ENCODE measurements at regions of chr9 and their contacts with region 1.

Region 1: GRCh38 chr9:126558051-126558665 is 55.6 kb upstream of the LMX1B start:
- DNase-seq: peak; percentile 38 to 72 (median 63)
- H3K4me3 ChIP-seq: no peak overlapping the region
- H3K27ac ChIP-seq: no peak overlapping the region
- H3K4me1 ChIP-seq: peaks cover 0 to 4% (median 2%) of the 10 kb centered on the region in 4 experiments
- H3K27me3 ChIP-seq: peaks cover 0 to 21% (median 4%) of the 10 kb centered on the region in 5 experiments

Region 2: GRCh38 chr9:126506361-126506941 is 51.7 kb before region 1 on chr9:
- CTCF ChIA-PET with region 1: interaction called, 118 read pairs
- POLR2A ChIA-PET with region 1: interaction called, 4 read pairs
- DNase-seq: no peak
- H3K4me3 ChIP-seq: no peak overlapping the region
- H3K27ac ChIP-seq: no peak overlapping the region
- H3K4me1 ChIP-seq: no peaks in the 10 kb centered on the region
- H3K27me3 ChIP-seq: peaks cover 0 to 5% (median 0%) of the 10 kb centered on the region in 5 experiments

Region 3: GRCh38 chr9:126532019-126532462 is 26.1 kb before region 1 on chr9:
- CTCF ChIA-PET with region 1: interaction called, 10 read pairs
- POLR2A ChIA-PET with region 1: no interaction called
- DNase-seq: no peak
- H3K4me3 ChIP-seq: no peak overlapping the region
- H3K27ac ChIP-seq: no peak overlapping the region
- H3K4me1 ChIP-seq: peaks cover 4 to 17% (median 15%) of the 10 kb centered on the region in 4 experiments
- H3K27me3 ChIP-seq: no peaks in the 10 kb centered on the region